ENCODE measurements at regions of chr1 and their contacts with region 1.

Region 1: DNA sequence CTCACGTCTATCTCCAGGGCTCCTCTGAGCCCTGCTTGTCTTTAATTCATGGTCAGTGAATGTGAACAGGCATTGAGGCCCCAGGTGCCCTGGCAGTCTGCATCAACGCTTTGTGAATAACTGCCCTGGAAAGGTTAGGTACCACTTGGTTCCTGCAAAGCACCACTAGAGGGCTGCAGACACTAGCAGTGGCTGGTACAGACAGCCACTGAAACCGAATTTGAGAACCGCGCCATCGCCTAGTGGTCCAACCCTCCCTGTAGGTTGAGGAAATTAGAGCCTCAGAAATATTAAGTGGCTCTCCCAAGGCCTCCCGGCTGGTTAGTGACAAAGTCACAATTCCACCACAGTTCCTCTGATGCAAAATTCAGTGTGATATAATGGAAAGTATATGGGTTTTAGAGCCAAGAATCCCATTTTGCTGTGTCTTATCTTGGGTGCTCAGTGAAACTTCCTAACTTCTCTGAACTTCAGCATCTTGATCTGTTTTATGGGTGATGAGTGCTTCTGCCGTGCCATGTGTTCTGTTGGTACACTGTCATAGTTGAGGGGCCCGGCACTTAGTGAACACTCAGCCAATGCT is 46.2 kb upstream of the BCL9 start:
- DNase-seq: peak; percentile 47 to 70 (median 54)
- ATAC-seq: peak; percentile 96
- H3K4me3 ChIP-seq: no peak overlapping the region
- H3K27ac ChIP-seq: no peak overlapping the region
- H3K4me1 ChIP-seq: no peaks in the 10 kb centered on the region
- H3K27me3 ChIP-seq: peaks cover 2 to 13% of the 10 kb centered on the region in 2 experiments; a peak in 3 of 5 replicates
- CTCF ChIP-seq: peak; percentile 80 to 92 (median 92)
- EP300 ChIP-seq: no peak
- POLR2A ChIP-seq: no peak
- RAD21 ChIP-seq: peak; percentile 86 to 90

Region 2: GRCh38 chr1:147273409-147274336 is 221.4 kb before region 1 on chr1:
- CTCF ChIA-PET with region 1: interaction called, 13 read pairs
- POLR2A ChIA-PET with region 1: no interaction called
- in situ Hi-C with region 1: no loop called
- intact Hi-C with region 1: no loop called
- DNase-seq: peak; percentile 70 to 72 (median 72)
- ATAC-seq: peak; percentile 86
- H3K4me3 ChIP-seq: no peak overlapping the region
- H3K27ac ChIP-seq: no peak overlapping the region
- H3K4me1 ChIP-seq: peaks cover 0 to 2% of the 10 kb centered on the region in 2 experiments; a peak in 2 of 5 replicates
- H3K27me3 ChIP-seq: no peaks in the 10 kb centered on the region
- CTCF ChIP-seq: peak; percentile 49 to 76 (median 62); a peak in 5 of 6 replicates
- EP300 ChIP-seq: no peak
- POLR2A ChIP-seq: no peak
- RAD21 ChIP-seq: peak; percentile 84 to 88

Region 3: DNA sequence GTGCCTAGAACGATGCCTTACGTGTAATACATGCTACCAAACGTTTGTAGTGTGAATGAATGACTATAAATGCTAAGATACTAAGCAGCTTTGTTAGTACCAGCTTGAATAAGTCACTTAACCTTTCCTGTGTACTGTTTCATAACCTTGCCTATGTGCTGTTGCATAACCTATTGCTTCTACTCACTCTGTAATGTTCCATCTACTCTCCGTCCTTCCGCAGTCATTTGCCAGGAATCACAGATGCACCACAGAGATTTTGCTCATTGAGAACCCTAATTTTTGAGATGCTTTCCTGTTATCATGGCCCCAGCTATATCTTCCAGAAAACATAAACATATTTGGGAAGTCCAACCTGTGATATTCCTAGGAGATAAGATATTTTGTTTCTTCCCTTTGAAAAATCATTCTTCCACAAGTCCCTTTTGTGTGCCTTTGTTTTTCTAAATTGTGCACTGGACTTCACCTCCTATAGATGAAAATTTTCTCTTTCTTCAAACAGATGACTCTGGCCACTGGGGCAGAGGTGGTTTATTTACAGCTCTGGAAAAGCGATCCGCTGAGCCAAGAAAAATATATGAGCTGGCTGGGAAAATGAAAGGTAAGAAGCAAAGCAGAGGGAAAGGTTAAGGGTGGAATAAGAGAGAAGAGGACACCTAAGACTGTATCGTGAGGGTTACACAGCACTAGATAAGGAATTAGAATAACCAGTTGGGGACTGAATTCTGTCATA is 207.8 kb before region 1 on chr1:
- CTCF ChIA-PET with region 1: no interaction called
- POLR2A ChIA-PET with region 1: no interaction called
- in situ Hi-C with region 1: loop called (anchors 5 kb)
- intact Hi-C with region 1: no loop called
- DNase-seq: no peak
- ATAC-seq: no peak
- H3K4me3 ChIP-seq: no peak overlapping the region
- H3K27ac ChIP-seq: no peak overlapping the region
- H3K4me1 ChIP-seq: no peaks in the 10 kb centered on the region
- H3K27me3 ChIP-seq: no peaks in the 10 kb centered on the region
- CTCF ChIP-seq: no peak
- EP300 ChIP-seq: no peak
- POLR2A ChIP-seq: no peak
- RAD21 ChIP-seq: no peak

Region 4: DNA sequence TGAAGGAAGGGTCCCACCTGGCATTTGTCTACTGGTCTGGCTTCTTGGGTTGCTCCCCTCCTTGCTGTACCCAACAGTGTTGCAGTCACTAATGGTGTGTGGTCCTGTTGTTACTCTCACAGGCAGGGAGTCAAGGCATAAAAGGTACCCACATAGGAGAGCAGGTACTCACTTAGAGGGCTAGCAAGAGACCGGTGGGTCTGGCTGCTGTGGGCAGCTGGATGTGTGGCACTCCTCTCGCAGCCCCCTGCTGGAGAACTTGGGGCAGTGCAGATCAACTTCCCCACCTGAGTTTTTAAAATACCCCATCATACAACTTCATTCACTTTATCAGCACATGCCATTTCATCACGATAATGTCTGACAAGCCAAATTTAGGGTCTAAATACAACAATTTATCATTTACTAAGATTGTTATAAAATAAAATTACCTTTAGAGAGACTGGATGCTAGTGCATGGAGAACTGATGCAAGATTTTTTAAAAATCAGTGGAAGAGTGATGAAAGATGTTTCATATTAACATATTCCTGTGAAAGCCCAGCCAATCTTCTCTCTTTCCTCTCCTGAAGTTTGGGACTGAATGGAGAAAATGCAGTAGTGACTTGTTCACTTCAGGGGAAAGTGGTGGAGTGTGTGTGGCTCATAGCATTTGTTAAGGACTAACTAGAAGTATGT is 132.5 kb after region 1 on chr1:
- CTCF ChIA-PET with region 1: interaction called, 9 read pairs
- POLR2A ChIA-PET with region 1: no interaction called
- in situ Hi-C with region 1: no loop called
- intact Hi-C with region 1: loop called (anchors 1 kb)
- DNase-seq: peak; percentile 52 to 79 (median 78)
- ATAC-seq: peak; percentile 85
- H3K4me3 ChIP-seq: no peak overlapping the region
- H3K27ac ChIP-seq: no peak overlapping the region
- H3K4me1 ChIP-seq: no peaks in the 10 kb centered on the region; a peak in 1 of 5 replicates
- H3K27me3 ChIP-seq: peaks cover 0 to 18% of the 10 kb centered on the region in 2 experiments; a peak in 2 of 5 replicates
- CTCF ChIP-seq: peak; percentile 71 to 88 (median 74)
- EP300 ChIP-seq: no peak
- POLR2A ChIP-seq: no peak
- RAD21 ChIP-seq: peak; percentile 50 to 67

Region 5: DNA sequence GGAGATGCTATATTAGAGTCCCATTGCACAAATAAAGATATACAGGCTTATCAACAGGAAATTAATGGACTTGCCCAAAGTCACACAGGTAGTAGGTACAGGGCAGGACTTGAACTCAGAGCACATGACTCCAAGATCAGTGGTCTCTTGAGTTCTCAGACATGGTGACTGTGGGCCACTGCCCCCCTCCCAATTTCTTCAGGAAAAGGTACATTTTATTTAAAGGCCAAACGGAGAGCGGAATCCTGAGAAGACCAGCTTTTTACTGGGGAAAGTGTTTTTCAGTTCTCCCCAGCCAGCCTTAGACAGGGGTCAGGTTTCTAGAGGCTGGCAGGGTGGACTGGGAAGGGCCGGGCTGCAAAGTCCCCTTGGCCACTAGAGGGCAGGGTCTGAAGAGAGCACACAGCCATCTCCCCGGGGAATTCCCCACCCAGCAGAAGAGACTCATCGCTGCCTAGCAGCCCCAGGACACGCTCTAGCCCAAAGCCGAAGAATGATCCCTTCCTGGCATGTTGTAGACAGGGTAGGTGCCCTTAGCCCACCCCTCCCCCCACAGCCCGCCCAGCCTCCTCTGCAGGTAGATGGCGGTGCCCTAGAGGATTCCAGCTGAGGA is 145.6 kb after region 1 on chr1:
- CTCF ChIA-PET with region 1: interaction called, 13 read pairs
- POLR2A ChIA-PET with region 1: no interaction called
- in situ Hi-C with region 1: no loop called
- intact Hi-C with region 1: loop called (anchors 2 kb)
- DNase-seq: peak; percentile 78 to 83 (median 80)
- ATAC-seq: peak; percentile 100
- H3K4me3 ChIP-seq: no peak overlapping the region
- H3K27ac ChIP-seq: no peak overlapping the region
- H3K4me1 ChIP-seq: peaks cover 0 to 12% of the 10 kb centered on the region in 2 experiments; a peak in 2 of 5 replicates
- H3K27me3 ChIP-seq: 0 out of 5 replicates have a peak, but pooled peaks cover 0 to 2% of the 10 kb centered on the region in 2 experiments
- CTCF ChIP-seq: peak; percentile 83 to 90 (median 83)
- EP300 ChIP-seq: no peak
- POLR2A ChIP-seq: no peak
- RAD21 ChIP-seq: peak; percentile 44 to 61; a peak in 3 of 4 replicates

Region 6: GRCh38 chr1:147683163-147683763 is 188.2 kb after region 1 on chr1:
- CTCF ChIA-PET with region 1: no interaction called
- POLR2A ChIA-PET with region 1: no interaction called
- in situ Hi-C with region 1: no loop called
- intact Hi-C with region 1: no loop called
- DNase-seq: no peak
- ATAC-seq: no peak
- H3K4me3 ChIP-seq: no peak overlapping the region
- H3K27ac ChIP-seq: no peak overlapping the region
- H3K4me1 ChIP-seq: no peaks in the 10 kb centered on the region
- H3K27me3 ChIP-seq: peaks cover 0 to 6% of the 10 kb centered on the region in 2 experiments; a peak in 1 of 5 replicates
- CTCF ChIP-seq: no peak
- EP300 ChIP-seq: no peak
- POLR2A ChIP-seq: no peak
- RAD21 ChIP-seq: no peak

Region 7: GRCh38 chr1:147700042-147701006 is 205.2 kb after region 1 on chr1:
- CTCF ChIA-PET with region 1: no interaction called
- POLR2A ChIA-PET with region 1: no interaction called
- in situ Hi-C with region 1: no loop called
- intact Hi-C with region 1: loop called (anchors 1 kb)
- DNase-seq: peak; percentile 43 to 50 (median 47)
- ATAC-seq: peak; percentile 88
- H3K4me3 ChIP-seq: no peak overlapping the region
- H3K27ac ChIP-seq: no peak overlapping the region
- H3K4me1 ChIP-seq: no peaks in the 10 kb centered on the region
- H3K27me3 ChIP-seq: peaks cover 0 to 15% of the 10 kb centered on the region in 2 experiments; a peak in 2 of 5 replicates
- CTCF ChIP-seq: peak; percentile 73 to 81 (median 73)
- EP300 ChIP-seq: no peak
- POLR2A ChIP-seq: no peak
- RAD21 ChIP-seq: peak; percentile 54 to 65

Region 8: DNA sequence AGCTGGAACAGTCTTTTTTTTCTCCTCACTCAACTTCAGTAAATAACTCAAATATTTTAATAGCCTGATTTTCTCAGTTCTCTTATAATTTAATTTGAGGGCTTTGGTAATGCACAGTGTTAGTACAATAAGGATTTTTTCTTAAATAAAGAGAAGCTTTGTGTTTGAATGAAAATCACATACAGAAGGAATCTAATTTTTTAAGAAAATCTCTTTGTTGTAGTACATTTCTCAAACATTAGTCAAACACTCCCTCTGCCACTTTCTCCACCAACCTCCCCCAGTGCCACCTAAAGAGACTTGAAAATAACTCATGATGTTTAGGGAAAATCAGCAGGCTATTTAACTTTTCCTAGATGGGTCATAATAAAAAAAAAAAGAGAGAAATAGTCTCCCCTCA is 217.5 kb after region 1 on chr1:
- CTCF ChIA-PET with region 1: no interaction called
- POLR2A ChIA-PET with region 1: no interaction called
- in situ Hi-C with region 1: no loop called
- intact Hi-C with region 1: no loop called
- DNase-seq: no peak
- ATAC-seq: no peak
- H3K4me3 ChIP-seq: no peak overlapping the region
- H3K27ac ChIP-seq: no peak overlapping the region
- H3K4me1 ChIP-seq: no peaks in the 10 kb centered on the region
- H3K27me3 ChIP-seq: peaks cover 0 to 6% of the 10 kb centered on the region in 2 experiments; a peak in 2 of 5 replicates
- CTCF ChIP-seq: no peak
- EP300 ChIP-seq: no peak
- POLR2A ChIP-seq: no peak
- RAD21 ChIP-seq: no peak

Measured in K562 (cell line).